H1 (cell line): ENCODE measurements at regions of chr15 and their contacts with region 1.

Region 1: DNA sequence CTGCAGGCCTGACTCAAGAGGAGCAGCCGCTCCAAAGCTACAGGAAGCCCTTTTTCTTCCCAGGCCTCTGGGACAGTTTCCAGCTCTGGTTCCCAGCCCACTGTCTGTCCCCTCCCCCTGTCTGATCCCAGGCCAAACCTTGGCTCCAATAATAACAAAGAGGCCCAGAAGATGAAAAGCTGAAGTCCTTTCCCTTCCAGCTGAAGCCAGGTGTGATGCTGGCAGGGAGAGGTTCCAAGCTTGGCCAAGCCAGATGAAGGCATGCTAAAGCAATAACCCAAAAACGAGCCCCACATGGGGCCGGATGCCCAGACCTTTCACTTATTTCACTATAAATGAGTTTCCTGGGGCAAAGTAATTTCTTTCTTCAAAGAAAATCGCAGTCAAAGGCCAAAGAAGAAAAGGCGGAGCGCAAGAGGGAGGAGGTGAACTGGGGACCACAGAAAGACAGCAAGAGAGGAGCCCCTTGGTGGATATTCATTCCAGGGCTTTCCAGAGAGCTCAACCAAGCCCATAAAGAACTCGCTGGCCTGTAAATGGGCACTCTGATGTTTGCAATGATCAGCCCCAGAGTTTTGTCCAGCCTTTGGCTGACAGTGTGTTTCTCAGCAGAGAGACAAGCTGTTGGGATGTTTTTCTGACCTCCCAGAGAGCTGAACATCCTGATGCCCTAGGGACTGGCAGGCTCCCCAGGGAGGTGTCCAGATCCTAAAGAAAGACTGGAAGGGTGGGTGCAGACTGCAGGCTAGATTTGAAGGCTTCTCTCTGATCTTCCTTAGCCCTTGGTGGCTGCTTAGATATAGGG is 157.6 kb downstream of the UACA start:
- DNase-seq: no peak
- H3K4me3 ChIP-seq: no peak overlapping the region
- H3K27ac ChIP-seq: no peak overlapping the region
- H3K4me1 ChIP-seq: peaks cover 1 to 8% (median 4%) of the 10 kb centered on the region in 4 experiments; a peak in 5 of 7 replicates
- H3K27me3 ChIP-seq: no peaks in the 10 kb centered on the region; a peak in 1 of 7 replicates
- CTCF ChIP-seq: no peak
- EP300 ChIP-seq: no peak
- POLR2A ChIP-seq: no peak
- RAD21 ChIP-seq: no peak

Region 2: DNA sequence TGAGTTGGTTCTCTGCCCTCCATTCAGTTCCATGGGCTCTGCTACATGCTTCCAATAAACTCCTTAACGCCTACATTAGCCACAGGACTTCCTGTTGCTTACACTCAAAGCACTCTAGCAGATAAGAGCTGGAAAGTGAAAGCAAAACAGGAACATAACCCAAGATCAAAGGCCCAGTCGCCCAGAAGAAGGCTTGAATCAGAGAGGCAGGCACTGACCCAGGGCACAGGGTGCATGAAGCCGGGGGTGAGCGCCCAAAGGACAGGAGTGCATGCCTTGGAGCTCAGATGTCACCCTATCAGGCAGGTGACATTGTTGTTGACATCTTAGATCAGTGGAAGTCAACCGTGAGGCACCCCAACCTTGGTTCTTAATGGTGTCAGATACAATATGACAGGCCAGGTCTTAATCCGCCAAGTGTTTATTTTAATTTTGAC is 77.5 kb before region 1 on chr15:
- CTCF ChIA-PET with region 1: no interaction called
- POLR2A ChIA-PET with region 1: no interaction called
- DNase-seq: peak in 1 of 2 experiments; percentile 32
- H3K4me3 ChIP-seq: no peak overlapping the region
- H3K27ac ChIP-seq: no peak overlapping the region
- H3K4me1 ChIP-seq: peaks cover 1 to 6% (median 4%) of the 10 kb centered on the region in 4 experiments; a peak in 4 of 7 replicates
- H3K27me3 ChIP-seq: no peaks in the 10 kb centered on the region
- CTCF ChIP-seq: no peak
- EP300 ChIP-seq: no peak
- POLR2A ChIP-seq: no peak
- RAD21 ChIP-seq: no peak

Region 3: GRCh38 chr15:70584838-70585706 is 20.7 kb before region 1 on chr15:
- CTCF ChIA-PET with region 1: interaction called, 14 read pairs
- POLR2A ChIA-PET with region 1: interaction called, 5 read pairs
- DNase-seq: peak; percentile 41 to 91
- H3K4me3 ChIP-seq: peak overlapping the region; percentile 17 to 63 (median 36)
- H3K27ac ChIP-seq: no peak overlapping the region
- H3K4me1 ChIP-seq: peaks cover 0 to 4% (median 3%) of the 10 kb centered on the region in 4 experiments; a peak in 3 of 7 replicates
- H3K27me3 ChIP-seq: peaks cover 0 to 10% (median 8%) of the 10 kb centered on the region in 4 experiments; a peak in 5 of 7 replicates
- CTCF ChIP-seq: peak; percentile 72 to 85 (median 72)
- EP300 ChIP-seq: no peak
- POLR2A ChIP-seq: no peak
- RAD21 ChIP-seq: peak; percentile 67 to 83

Region 4: GRCh38 chr15:70636540-70637165 is 30.8 kb after region 1 on chr15:
- CTCF ChIA-PET with region 1: interaction called, 13 read pairs
- POLR2A ChIA-PET with region 1: interaction called, 3 read pairs
- DNase-seq: no peak
- H3K4me3 ChIP-seq: no peak overlapping the region
- H3K27ac ChIP-seq: no peak overlapping the region
- H3K4me1 ChIP-seq: peaks cover 14 to 27% (median 17%) of the 10 kb centered on the region in 4 experiments
- H3K27me3 ChIP-seq: peaks cover 0 to 2% (median 0%) of the 10 kb centered on the region in 4 experiments; a peak in 1 of 7 replicates
- CTCF ChIP-seq: peak; percentile 35 to 71 (median 66)
- EP300 ChIP-seq: no peak
- POLR2A ChIP-seq: no peak
- RAD21 ChIP-seq: peak; percentile 78 to 84

Region 5: DNA sequence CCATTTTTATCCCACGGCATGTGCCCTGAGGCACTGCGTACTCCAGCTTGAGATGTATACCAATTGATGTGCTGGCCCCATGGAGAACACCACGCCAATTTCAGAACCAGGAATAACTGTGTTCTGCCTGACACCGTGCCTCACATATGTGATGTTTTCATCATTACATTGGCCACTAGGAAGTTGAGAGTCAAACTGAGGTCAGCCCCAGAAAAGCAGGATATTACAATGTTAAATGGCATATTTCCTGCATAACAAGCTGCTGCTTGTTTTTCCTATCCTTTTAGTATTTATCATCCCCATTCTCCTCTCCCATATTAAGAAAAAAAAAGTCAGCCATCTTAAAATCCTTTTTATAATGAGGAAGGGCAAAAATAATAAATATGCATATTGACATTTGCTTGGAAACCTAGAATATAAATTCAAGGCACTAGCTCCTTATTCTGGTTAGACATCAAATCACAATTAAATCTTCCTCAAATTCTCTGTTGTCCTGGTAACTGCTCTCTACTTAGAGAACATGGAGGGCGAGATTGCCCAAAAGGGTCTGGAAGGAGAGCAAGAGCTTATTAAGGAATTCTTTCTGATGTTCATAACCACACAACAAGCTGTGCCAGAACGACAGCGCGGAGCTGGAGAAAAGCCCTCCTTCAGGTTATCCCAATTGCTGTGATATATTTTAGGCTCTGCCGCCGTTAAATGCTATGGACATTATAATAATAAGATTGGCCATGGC is 44.9 kb after region 1 on chr15:
- CTCF ChIA-PET with region 1: no interaction called
- POLR2A ChIA-PET with region 1: no interaction called
- DNase-seq: no peak
- H3K4me3 ChIP-seq: no peak overlapping the region
- H3K27ac ChIP-seq: no peak overlapping the region
- H3K4me1 ChIP-seq: no peaks in the 10 kb centered on the region
- H3K27me3 ChIP-seq: no peaks in the 10 kb centered on the region
- CTCF ChIP-seq: no peak
- EP300 ChIP-seq: no peak
- POLR2A ChIP-seq: no peak
- RAD21 ChIP-seq: no peak